ENCODE measurements at regions of chr9 and their contacts with region 1.

Region 1: DNA sequence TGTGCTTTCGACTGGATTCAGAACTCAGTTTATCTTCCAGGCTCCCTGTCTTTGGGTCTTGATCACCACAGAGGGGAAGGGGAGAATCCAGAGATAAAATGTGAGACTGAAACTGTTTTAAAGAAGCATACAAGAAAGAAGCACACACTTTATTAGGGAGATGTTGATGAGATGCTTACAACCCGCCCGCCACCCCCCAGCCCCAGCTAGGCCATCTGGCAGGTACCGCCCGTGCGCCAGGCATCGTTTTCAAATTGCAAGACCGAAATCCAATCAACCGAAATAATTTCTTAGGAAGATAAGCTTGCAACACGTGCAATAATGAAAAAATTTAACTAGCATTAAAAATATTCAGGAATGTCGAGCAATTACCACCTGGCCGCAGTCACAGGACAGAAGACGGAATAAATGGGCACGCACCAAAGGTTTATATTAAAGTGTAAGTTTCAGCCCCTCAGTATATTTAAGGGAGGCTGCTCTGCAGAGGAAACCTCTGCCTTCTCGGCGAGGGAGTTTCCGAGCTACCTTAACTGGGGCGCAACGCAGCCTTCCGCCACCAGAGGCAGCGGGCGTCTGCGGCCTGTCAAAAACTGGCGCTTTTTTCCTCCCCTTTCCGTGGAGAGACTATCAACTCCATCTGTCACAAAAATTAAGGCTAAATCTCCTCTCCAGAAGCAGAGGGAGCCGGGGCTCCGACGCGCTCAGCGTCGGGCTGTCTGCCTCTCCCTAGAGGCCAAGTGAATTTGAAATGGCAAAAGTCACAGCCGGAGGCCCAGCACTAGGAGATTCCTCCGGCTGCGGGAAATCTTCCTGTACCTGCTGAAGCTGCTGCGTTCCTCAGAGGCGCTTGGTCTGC is 996 bp upstream of the GAS1 start:
- DNase-seq: peak; percentile 50
- H3K4me3 ChIP-seq: peak overlapping the region; percentile 86
- H3K27ac ChIP-seq: peak overlapping the region; percentile 4
- H3K27me3 ChIP-seq: peaks cover 12% of the 10 kb centered on the region
- CTCF ChIP-seq: peak; percentile 94

Region 2: DNA sequence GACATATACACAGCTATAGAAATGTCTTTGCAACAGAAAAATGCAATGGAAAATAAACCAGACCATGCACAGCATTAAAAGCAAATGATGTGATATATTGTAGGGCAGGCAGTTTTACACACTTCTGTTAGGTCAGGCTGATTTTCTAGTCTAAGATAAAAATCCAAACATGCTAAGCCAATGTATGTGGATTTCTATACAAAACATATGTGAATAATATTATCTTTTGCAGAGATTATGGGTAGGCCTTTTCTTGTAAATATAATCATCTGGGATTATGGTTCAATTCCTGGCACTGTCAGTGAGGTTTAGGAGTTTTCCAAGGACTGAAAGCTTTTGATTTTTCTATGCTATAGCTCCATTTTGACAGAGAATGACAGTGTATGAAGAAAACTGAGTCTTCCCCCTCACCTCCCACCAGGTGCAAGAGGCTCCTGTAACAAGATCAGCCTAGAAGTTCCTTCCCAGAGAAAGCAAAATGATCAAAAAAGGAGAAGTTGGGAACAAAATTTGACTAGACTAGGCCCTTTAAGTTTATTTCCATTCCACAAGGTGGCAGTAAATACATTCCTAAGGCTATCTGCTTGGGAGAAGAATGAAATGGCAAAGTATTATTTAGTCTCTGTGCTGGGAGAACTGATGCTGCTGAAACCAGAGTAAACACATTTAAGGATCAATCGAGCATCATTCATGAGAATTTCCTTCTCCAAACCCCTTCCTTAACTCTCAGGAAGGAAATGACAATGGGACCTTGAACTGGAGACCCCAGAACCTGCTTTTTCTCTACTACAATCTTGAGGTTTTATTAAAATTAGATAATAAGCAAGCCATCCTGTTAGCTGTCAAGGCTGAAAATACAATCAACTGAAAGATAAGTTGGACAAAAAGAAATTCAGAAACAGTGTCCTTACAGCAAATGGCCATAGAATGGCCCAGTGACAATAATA is 461.1 kb before region 1 on chr9:
- CTCF ChIA-PET with region 1: interaction called, 37 read pairs
- POLR2A ChIA-PET with region 1: no interaction called
- DNase-seq: no peak
- H3K4me3 ChIP-seq: no peak overlapping the region
- H3K27ac ChIP-seq: no peak overlapping the region
- H3K27me3 ChIP-seq: no peaks in the 10 kb centered on the region
- CTCF ChIP-seq: peak; percentile 75

Region 3: DNA sequence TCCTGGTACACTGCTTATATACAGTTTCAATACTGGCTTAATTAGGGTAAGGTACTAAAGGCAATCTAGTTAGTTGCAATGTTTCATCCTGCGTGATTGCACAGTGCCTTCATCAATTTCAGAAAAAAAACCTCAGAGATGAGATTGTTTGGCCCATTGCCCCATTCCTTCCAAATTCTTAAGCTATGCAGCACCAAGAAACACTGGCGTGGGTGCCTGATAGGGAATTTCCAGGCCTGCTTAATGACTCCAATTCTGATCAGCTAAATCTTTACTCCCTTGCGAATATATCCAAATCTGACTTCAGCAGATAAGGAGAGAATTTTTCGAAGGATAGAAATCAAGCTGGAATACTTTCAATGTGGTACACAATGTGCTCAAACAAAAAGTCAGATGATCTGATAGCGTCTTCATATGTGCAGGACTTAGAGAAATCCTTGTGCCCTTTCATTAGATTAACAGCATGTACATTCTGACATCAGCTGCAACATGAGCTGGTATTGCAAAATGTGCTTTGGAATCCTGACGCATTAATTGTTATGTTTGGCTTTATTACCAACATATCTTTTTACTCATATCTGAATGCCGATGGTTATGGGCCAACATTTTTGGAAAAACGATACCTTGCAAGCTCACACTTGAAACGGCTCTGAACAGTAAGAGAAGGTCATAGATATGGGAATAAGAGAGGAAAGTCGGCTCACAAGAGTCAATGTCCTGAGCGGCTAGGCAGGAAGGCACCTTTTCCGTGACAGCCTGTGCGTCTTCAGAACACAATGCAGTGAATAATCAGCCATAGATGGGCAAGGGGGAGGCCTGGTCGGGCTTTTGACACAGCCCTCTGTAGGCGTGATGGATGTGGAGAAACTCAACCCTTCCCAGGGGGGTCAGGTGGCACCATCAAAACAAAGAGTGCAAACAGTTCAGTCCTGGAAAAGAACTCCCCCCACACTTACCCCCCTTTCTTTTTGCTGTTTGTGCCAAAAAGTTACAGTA is 35.3 kb after region 1 on chr9:
- CTCF ChIA-PET with region 1: interaction called, 5 read pairs
- POLR2A ChIA-PET with region 1: interaction called, 19 read pairs
- DNase-seq: peak; percentile 88
- H3K4me3 ChIP-seq: peak overlapping the region; percentile 36
- H3K27ac ChIP-seq: peak overlapping the region; percentile 94
- H3K27me3 ChIP-seq: no peaks in the 10 kb centered on the region
- CTCF ChIP-seq: no peak

Region 4: DNA sequence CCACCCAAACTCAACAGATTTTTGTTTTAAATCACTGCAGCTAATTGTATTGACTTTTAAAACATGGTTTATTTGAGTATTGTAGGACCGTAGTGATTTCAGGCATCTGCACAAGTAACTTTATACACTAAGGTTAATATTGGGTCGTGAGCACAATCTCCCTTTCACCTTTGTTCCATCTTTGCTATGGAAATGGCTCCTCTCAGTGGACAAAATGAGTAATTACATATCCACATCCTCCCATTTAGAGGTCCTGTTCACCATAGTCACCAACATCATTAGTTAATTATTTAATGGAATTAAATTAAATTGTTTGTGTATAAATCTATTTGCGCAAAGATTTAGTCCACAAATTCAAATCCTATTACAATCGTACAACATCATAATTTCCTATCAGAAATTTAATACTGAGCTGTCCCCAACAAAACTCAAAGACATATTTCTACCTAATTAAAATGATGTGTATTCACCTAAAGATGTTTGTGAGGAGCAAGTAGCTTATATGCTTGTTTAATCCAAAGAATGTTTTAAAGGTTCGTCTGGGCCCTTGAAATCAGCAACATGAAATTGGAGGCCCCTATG is 376.4 kb after region 1 on chr9:
- CTCF ChIA-PET with region 1: interaction called, 30 read pairs
- POLR2A ChIA-PET with region 1: interaction called, 5 read pairs
- DNase-seq: peak; percentile 20
- H3K4me3 ChIP-seq: no peak overlapping the region
- H3K27ac ChIP-seq: no peak overlapping the region
- H3K27me3 ChIP-seq: no peaks in the 10 kb centered on the region
- CTCF ChIP-seq: peak; percentile 72